OCI-LY7 (cell line): ENCODE measurements at regions of chr5 and their contacts with region 1.

Region 1: DNA sequence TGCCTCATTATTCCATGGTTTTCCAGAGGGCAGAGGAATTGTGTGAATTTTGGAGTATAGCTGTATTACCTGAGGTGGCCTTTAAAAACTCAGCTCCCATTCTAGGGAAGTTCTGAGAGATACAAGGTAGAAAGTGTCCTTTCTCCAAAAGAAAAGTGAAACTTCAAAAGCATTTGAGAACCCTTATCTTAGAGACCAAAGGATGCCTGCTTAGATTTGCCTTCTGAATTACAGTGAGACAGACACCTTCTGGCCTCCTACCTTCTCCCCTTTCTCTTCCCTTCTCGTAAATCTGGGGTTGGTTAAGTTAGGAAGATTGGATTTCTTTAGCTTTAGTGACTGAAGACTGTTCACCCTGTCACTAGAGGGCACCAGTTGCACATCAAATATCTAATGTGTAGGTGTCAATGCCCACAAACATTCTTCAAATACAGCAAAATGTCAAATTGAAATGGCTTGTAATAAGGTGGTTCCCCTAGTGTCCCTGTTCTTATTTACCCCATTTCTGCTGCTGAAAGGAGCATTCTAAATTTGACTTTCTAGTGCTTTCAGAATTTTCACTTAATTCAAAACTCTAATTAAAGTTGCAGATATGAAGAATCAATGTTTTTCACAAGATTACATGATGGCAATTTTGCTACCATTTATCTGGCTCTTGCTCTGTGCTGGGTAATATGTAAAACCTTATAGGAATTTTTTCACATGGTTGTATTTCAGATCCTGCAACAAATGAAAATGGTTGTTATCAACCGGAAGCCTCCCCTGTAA is 46.7 kb downstream of the PRRC1 start:
- DNase-seq: peak; percentile 70
- H3K4me3 ChIP-seq: no peak overlapping the region
- H3K27ac ChIP-seq: no peak overlapping the region
- H3K4me1 ChIP-seq: no peaks in the 10 kb centered on the region
- CTCF ChIP-seq: peak; percentile 91

Region 2: DNA sequence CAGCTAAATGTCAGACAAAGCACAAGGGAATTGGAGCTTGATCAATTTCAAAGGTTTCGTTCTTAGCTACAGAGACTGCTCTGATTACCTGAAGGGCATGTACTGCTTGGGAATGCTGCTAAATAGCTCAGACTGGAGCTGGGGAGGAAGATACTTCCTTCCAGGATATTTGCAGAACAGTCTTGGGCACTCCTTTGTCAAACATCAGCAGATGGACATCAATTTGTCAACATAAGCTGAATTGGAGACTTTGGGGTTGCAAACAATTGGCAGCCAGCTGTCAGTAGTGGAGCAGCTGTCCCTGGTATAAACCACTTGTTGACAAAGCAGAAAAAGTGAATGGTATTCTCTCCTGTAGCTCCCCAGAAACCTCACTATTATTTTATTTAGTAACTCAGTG is 321.0 kb after region 1 on chr5:
- CTCF ChIA-PET with region 1: no interaction called
- POLR2A ChIA-PET with region 1: no interaction called
- intact Hi-C with region 1: loop called (anchors 10 kb)
- DNase-seq: no peak
- H3K4me3 ChIP-seq: no peak overlapping the region
- H3K27ac ChIP-seq: no peak overlapping the region
- H3K4me1 ChIP-seq: no peaks in the 10 kb centered on the region
- CTCF ChIP-seq: no peak